ENCODE measurements at regions of chr9 and their contacts with region 1.

Region 1: GRCh38 chr9:105842023-105842644 is 147.8 kb downstream of the TMEM38B start:
- DNase-seq: peak; percentile 54 to 61
- H3K4me3 ChIP-seq: no peak overlapping the region
- H3K4me1 ChIP-seq: no peaks in the 10 kb centered on the region
- H3K27me3 ChIP-seq: no peaks in the 10 kb centered on the region

Region 2: DNA sequence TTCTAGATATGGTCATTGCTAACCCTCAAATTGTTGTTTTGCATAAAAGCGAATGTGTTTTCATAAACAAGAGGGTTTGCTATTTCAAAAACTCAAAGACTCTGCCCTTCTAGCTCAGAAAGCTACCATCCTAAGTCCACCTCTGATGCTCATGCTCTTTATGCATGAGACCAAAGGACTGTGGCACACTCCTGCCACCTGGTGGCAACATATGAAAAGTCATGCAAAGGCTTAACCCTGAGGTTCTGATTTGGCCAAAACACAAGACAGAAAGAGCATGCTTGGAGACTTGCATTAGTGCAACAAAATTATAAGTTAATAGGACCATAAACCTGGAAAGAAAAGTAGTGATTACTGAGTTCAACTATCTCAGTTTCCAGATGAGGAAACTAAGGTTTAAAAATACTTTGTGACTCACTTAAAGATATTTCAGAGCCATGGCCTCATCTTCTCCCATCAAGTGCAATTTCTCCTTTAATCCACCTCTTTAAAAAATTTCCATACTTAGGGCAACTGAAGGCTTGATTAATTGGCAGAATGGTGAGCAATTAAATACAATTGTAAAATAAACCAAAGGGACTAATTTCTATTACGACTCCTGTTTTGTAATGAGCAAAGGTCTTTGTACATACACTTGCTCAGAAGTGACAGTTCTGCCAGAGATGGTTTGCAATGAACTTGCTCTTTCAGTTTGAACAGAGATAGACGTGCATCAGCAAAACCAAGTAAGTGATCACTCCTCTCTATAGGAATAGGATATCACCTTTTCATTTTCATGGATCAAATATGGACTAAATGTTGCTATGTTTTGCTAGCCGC is 1330.2 kb after region 1 on chr9:
- in situ Hi-C with region 1: loop called (anchors 25 kb)
- DNase-seq: peak; percentile 77 to 83
- H3K4me3 ChIP-seq: no peak overlapping the region
- H3K4me1 ChIP-seq: no peaks in the 10 kb centered on the region
- H3K27me3 ChIP-seq: no peaks in the 10 kb centered on the region

Measured in HAP-1 (cell line).